ENCODE measurements at regions of chr17 and their contacts with region 1.

Region 1: DNA sequence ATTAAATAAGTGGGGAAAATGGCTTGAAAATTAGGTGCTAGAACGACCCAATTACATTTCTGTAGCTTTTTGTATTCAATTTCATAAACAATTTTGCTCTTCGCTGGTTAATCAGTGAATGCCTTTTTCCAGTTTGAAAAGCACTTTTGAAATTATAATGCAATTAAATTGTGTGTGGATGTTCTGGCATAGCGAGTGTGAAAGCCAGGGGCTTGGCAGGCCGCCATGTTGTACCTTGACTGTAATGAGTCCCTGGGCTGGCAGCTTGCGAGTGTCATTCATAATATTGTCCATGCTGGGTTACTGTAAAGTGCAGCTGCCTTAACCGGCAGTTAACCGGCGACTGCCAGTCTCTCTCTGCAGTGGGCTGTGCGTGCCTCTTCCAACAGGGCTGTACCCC is 177.8 kb downstream of the CCDC182 start:
- DNase-seq: no peak
- ATAC-seq: no peak
- H3K4me3 Mint-ChIP-seq: no peak overlapping the region
- H3K27ac Mint-ChIP-seq: no peak overlapping the region
- H3K4me1 Mint-ChIP-seq: no peaks in the 10 kb centered on the region
- H3K27me3 Mint-ChIP-seq: no peaks in the 10 kb centered on the region
- CTCF ChIP-seq: no peak

Region 2: GRCh38 chr17:57552114-57552624 is 15.1 kb before region 1 on chr17:
- CTCF ChIA-PET with region 1: interaction called, 14 read pairs
- POLR2A ChIA-PET with region 1: interaction called, 3 read pairs
- intact Hi-C with region 1: no loop called
- DNase-seq: peak; percentile 60
- ATAC-seq: peak; percentile 79
- H3K4me3 Mint-ChIP-seq: no peak overlapping the region
- H3K27ac Mint-ChIP-seq: no peak overlapping the region
- H3K4me1 Mint-ChIP-seq: peaks cover 36% of the 10 kb centered on the region
- H3K27me3 Mint-ChIP-seq: no peaks in the 10 kb centered on the region
- CTCF ChIP-seq: peak; percentile 48

Region 3: GRCh38 chr17:57604771-57605674 is 37.8 kb after region 1 on chr17:
- CTCF ChIA-PET with region 1: no interaction called
- POLR2A ChIA-PET with region 1: no interaction called
- intact Hi-C with region 1: no loop called
- DNase-seq: peak; percentile 74
- ATAC-seq: peak; percentile 51
- H3K4me3 Mint-ChIP-seq: peak overlapping the region; percentile 40
- H3K27ac Mint-ChIP-seq: peak overlapping the region; percentile 93
- H3K4me1 Mint-ChIP-seq: peaks cover 84% of the 10 kb centered on the region
- H3K27me3 Mint-ChIP-seq: no peaks in the 10 kb centered on the region
- CTCF ChIP-seq: no peak

Measured in activated CD8-positive, alpha-beta T cell treated with anti-CD3 and anti-CD28 coated beads for 36 hours (primary cell).